ENCODE measurements at regions of chr7 and their contacts with region 1.

Region 1: DNA sequence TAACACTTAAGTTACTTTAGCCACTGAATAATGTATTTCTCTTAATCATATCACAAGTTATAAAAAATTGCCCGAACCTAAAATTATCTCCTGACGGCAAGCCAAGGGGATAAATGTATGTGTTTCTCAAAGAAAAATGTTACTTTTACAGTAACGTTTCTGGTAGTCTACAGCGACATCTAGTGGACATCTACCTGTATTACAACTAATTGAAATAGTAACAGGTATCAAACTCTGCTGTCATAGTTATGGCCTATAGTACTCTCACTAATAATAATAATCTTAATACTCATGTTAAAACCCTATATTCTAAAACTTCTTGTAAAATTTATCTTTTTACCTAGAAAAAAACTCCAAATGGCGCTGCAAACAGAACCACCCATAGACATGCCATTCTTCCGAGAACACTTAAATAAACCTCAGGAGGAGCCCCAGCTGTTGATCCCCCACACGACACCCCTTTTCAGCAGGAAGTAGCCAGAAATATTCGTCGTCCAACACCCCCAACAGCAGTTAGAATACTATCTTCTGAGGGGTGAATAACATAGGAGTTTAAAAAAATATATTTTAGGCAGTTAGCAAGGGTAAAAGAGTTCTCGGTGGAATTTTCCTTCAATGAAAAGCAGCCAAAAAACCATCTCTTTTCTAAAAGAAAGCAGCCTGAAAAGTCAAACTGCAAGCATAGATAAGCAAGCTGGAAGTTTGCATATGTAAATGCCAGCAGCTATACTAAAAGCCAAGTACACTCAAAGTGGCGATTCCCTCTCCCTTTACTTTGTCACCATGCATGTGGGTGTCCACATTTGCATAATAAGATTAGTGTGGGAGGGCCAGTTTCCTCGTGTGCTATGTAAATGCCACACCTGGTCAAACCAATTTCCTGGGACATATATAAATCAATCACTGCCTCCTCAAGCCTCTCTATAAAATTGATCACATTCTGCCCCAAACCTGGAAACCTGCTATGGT is 40.5 kb upstream of the ZNF107 start:
- DNase-seq: no peak
- ATAC-seq: no peak
- H3K4me3 ChIP-seq: no peak overlapping the region
- H3K27ac ChIP-seq: no peak overlapping the region
- H3K4me1 ChIP-seq: no peaks in the 10 kb centered on the region
- H3K27me3 ChIP-seq: peaks cover 0 to 5% (median 0%) of the 10 kb centered on the region in 9 donors
- CTCF ChIP-seq: peak; percentile 67 to 94 (median 86)
- POLR2A ChIP-seq: no peak

Region 2: DNA sequence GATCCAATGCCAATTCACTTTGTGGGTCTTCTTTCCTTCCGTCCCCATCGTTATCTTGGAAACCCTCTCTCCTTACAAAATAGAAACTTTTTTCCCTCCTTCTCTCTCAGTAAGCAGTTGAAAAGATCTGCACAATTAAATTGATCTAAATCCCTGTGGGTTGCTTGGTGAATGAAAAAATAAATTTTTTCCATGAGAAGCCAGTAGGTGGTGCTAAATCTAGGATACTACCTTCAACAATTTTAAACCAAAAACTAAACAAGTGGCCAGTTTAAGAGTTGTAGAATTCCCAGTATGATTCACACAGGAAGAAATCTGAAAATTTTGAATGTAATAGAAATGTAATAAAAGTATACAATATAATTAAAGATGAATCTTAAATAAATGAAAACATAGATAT is 1617.0 kb before region 1 on chr7:
- intact Hi-C with region 1: loop called in 3 of 10 experiments (anchors 5 to 10 kb)
- DNase-seq: no peak
- ATAC-seq: no peak
- H3K4me3 ChIP-seq: no peak overlapping the region
- H3K27ac ChIP-seq: no peak overlapping the region
- H3K4me1 ChIP-seq: no peaks in the 10 kb centered on the region
- H3K27me3 ChIP-seq: no peaks in the 10 kb centered on the region
- CTCF ChIP-seq: peak in 6 of 12 donors; percentile 6 to 34 (median 14)
- POLR2A ChIP-seq: no peak

Region 3: GRCh38 chr7:64320547-64321513 is 304.6 kb before region 1 on chr7:
- intact Hi-C with region 1: loop called in 1 of 10 experiments (anchors 10 kb)
- DNase-seq: no peak
- ATAC-seq: peak in 3 of 4 donors; percentile 67 to 75 (median 67)
- H3K4me3 ChIP-seq: no peak overlapping the region
- H3K27ac ChIP-seq: no peak overlapping the region
- H3K4me1 ChIP-seq: peaks cover 0 to 3% (median 0%) of the 10 kb centered on the region in 12 donors
- H3K27me3 ChIP-seq: no peaks in the 10 kb centered on the region
- CTCF ChIP-seq: peak in 6 of 12 donors; percentile 10 to 41 (median 24)
- POLR2A ChIP-seq: no peak

Region 4: DNA sequence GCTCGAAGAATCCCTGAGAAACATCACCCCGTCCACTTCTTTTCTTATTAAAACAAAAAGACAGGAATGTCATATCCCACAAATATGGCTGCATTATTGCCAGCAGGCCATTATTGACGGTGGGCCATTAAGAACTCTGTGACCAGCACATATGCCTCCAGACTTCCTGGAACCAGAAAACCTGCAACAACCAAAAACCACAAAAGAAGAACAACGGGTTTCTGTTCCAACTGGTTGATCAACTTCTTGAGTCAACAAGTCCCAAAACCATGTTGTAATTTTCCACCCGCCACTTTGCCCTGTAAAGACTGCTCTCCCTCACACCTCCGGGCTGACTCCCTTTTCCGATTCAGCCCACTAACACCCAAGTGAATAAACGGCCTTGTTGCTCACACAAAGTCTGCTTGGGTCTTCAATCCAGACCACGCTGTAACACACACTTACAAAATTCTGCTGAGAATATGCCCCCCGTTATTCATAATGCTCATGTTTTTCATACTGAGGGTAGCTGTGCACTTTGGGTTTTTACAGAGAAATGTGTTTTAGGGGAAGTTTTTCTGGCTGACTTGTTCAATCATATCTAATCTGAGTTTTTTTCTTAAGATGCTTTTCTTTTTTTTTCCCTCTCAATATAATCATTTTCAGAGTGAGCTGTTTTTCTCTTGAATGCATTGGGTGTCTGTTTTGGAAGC is 61.2 kb after region 1 on chr7:
- intact Hi-C with region 1: no loop called
- DNase-seq: no peak
- ATAC-seq: no peak
- H3K4me3 ChIP-seq: no peak overlapping the region
- H3K27ac ChIP-seq: no peak overlapping the region
- H3K4me1 ChIP-seq: no peaks in the 10 kb centered on the region
- H3K27me3 ChIP-seq: no peaks in the 10 kb centered on the region
- CTCF ChIP-seq: no peak
- POLR2A ChIP-seq: no peak

Measured in heart left ventricle (tissue), 16 donors.